ENCODE measurements at regions of chr3 and their contacts with region 1.

Region 1: GRCh38 chr3:16264708-16265454 is at the starts of genes DPH3 and OXNAD1:
- DNase-seq: peak; percentile 98
- CTCF ChIP-seq: no peak

Region 2: GRCh38 chr3:16227566-16227965 is 37.3 kb before region 1 on chr3:
- CTCF ChIA-PET with region 1: no interaction called
- POLR2A ChIA-PET with region 1: no interaction called
- DNase-seq: no peak
- CTCF ChIP-seq: no peak

Region 3: GRCh38 chr3:16247276-16248061 is 17.4 kb before region 1 on chr3:
- CTCF ChIA-PET with region 1: interaction called, 13 read pairs
- POLR2A ChIA-PET with region 1: no interaction called
- DNase-seq: peak; percentile 78
- CTCF ChIP-seq: peak; percentile 94

Region 4: DNA sequence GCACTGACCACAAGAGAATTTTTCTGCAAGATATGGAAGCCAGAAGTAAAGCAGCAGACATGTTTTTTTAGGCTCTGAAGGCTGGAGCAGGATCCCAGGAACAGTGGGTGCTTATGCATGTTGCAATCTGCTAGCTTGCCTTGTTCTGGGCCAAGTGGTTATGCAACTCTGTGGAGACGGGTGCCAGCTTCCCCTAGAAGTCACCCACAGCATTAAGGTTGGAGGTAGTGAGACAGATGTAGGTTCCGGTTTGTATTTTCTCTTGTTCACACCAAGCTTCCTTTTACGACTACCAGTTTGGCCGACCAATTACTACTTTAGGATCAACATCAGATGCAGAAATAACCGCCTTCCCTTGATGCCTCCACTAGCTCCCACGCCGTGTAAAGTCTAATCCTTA is 11.3 kb before region 1 on chr3:
- CTCF ChIA-PET with region 1: interaction called, 13 read pairs
- POLR2A ChIA-PET with region 1: no interaction called
- DNase-seq: no peak
- CTCF ChIP-seq: no peak

Region 5: GRCh38 chr3:16280671-16281070 is 15.8 kb after region 1 on chr3:
- CTCF ChIA-PET with region 1: interaction called, 21 read pairs
- POLR2A ChIA-PET with region 1: interaction called, 3 read pairs
- DNase-seq: no peak
- CTCF ChIP-seq: no peak

Region 6: DNA sequence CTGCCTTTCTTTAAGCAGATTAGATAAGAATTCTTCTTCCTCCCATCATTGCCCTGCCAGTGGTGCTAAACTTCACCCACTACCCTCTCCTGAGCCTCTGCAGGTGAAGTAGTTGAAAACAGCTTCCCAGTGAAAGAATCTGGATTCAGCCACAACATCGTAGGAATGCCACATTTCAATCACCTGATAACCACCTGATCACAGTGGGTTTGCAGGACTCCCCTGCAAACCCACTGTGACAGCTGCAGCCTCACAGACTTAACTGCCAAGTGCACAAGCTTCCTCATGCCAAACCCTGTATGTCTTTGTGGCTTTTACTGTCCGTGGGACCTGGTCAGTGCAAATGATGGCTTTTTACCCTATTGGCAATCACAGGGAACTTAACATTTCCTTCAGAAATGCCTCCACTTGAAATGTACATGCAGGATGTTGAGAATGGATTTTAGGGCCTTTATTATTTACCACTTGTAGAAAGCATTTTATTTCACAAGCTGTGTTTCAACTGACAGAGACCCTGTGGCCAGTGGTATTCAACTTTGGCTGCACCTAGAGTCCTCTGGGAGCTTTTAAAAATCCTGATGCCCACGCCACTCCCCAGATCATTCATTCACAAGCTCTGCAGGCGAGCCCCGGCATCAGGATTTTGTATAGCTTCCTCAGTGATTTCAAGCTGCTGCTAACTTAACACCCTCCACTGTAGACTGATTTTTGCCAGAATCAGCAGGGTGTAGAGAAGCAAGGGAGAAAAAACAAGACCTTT is 49.2 kb after region 1 on chr3:
- CTCF ChIA-PET with region 1: no interaction called
- POLR2A ChIA-PET with region 1: no interaction called
- DNase-seq: no peak
- CTCF ChIP-seq: no peak

Region 7: GRCh38 chr3:16489326-16490277 is 224.7 kb after region 1 on chr3:
- CTCF ChIA-PET with region 1: no interaction called
- POLR2A ChIA-PET with region 1: no interaction called
- DNase-seq: no peak
- CTCF ChIP-seq: no peak

Region 8: GRCh38 chr3:16550676-16551341 is 285.9 kb after region 1 on chr3:
- CTCF ChIA-PET with region 1: interaction called, 53 read pairs
- POLR2A ChIA-PET with region 1: no interaction called
- DNase-seq: peak; percentile 65
- CTCF ChIP-seq: peak; percentile 90

Measured in GM10248 (cell line).